ENCODE measurements at regions of chr6 and their contacts with region 1.

Region 1: GRCh38 chr6:32885698-32886286 is 31.8 kb downstream of the PSMB9 start:
- DNase-seq: no peak
- ATAC-seq: peak; percentile 70
- H3K4me3 Mint-ChIP-seq: no peak overlapping the region
- H3K27ac Mint-ChIP-seq: no peak overlapping the region
- H3K4me1 Mint-ChIP-seq: peaks cover 6% of the 10 kb centered on the region
- H3K27me3 Mint-ChIP-seq: no peaks in the 10 kb centered on the region
- CTCF ChIP-seq: peak; percentile 74

Region 2: GRCh38 chr6:32912951-32913350 is 27.2 kb after region 1 on chr6:
- CTCF ChIA-PET with region 1: interaction called, 11 read pairs
- POLR2A ChIA-PET with region 1: no interaction called
- intact Hi-C with region 1: no loop called
- DNase-seq: no peak
- ATAC-seq: no peak
- H3K4me3 Mint-ChIP-seq: no peak overlapping the region
- H3K27ac Mint-ChIP-seq: no peak overlapping the region
- H3K4me1 Mint-ChIP-seq: no peaks in the 10 kb centered on the region
- H3K27me3 Mint-ChIP-seq: peaks cover 8% of the 10 kb centered on the region
- CTCF ChIP-seq: no peak

Region 3: GRCh38 chr6:32940656-32941213 is 54.9 kb after region 1 on chr6 and contains the start of gene HLA-DMB:
- CTCF ChIA-PET with region 1: interaction called, 11 read pairs
- POLR2A ChIA-PET with region 1: no interaction called
- intact Hi-C with region 1: no loop called
- DNase-seq: peak; percentile 69
- ATAC-seq: peak; percentile 76
- H3K4me3 Mint-ChIP-seq: peak within 1 kb of the TSS; percentile 77
- H3K27ac Mint-ChIP-seq: peak within 1 kb of the TSS; percentile 97
- H3K4me1 Mint-ChIP-seq: peaks cover 64% of the 10 kb centered on the region
- H3K27me3 Mint-ChIP-seq: no peaks in the 10 kb centered on the region
- CTCF ChIP-seq: no peak
- total RNA-seq, gene HLA-DMB: 3.5 to 3.6 TPM

Region 4: DNA sequence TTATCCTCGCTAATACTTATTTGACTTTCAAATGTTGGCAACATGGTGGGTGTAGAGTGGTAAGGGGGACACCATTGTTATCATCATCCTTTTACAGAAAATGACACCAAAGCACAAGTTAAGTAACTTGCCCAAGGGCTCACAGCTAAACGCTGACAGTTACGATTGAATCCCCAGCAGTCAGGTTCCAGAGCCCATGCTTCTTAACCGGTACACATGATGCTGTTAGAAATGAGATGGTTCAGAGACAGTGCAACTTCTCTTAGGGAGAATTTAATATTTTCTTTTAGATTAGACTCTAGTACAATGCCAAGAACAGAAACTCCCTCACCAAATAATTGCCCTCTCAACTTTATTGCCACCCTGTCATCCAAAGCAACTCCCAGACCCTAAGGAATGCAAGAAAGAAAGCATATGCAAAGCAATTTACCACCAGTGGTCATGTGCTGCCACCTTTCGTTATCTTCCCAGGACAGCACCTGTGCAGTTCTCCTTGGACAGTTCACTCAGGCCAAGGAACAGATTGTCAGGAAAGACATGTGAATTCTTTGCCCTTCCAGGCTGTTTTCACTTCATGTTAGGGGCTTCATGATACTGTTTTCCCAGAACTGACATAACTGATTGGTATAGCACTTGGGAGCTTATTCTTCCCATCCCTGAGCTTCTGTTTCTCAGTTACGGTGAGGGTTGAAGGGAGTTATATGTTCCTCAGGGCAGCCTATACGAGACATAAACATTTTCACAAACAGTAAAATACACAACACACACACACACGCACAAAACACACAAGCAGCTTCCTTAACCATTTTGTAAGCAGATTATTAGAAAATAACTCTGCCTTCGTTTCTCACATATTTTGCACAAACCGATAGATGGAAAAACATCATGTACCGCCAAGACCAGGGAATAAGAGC is 62.0 kb after region 1 on chr6:
- CTCF ChIA-PET with region 1: interaction called, 35 read pairs
- POLR2A ChIA-PET with region 1: interaction called, 6 read pairs
- intact Hi-C with region 1: loop called (anchors 5 kb)
- DNase-seq: peak; percentile 62
- ATAC-seq: no peak
- H3K4me3 Mint-ChIP-seq: no peak overlapping the region
- H3K27ac Mint-ChIP-seq: no peak overlapping the region
- H3K4me1 Mint-ChIP-seq: peaks cover 72% of the 10 kb centered on the region
- H3K27me3 Mint-ChIP-seq: no peaks in the 10 kb centered on the region
- CTCF ChIP-seq: peak; percentile 68

Region 5: GRCh38 chr6:33794891-33795623 is 909.3 kb after region 1 on chr6:
- CTCF ChIA-PET with region 1: no interaction called
- POLR2A ChIA-PET with region 1: no interaction called
- intact Hi-C with region 1: no loop called
- DNase-seq: no peak
- ATAC-seq: no peak
- H3K4me3 Mint-ChIP-seq: no peak overlapping the region
- H3K27ac Mint-ChIP-seq: no peak overlapping the region
- H3K4me1 Mint-ChIP-seq: no peaks in the 10 kb centered on the region
- H3K27me3 Mint-ChIP-seq: peaks cover 10% of the 10 kb centered on the region
- CTCF ChIP-seq: no peak